ENCODE measurements at regions of chr12 and their contacts with region 1.

Region 1: GRCh38 chr12:68932961-68933893 is at the start of gene CPM:
- DNase-seq: peak; percentile 43 to 76
- ATAC-seq: peak; percentile 96 to 99 (median 97)
- H3K4me3 ChIP-seq: peak within 1 kb of the TSS; percentile 14 to 91 (median 71)
- H3K27ac ChIP-seq: peak within 1 kb of the TSS in 9 of 10 donors; percentile 36 to 87 (median 62)
- H3K4me1 ChIP-seq: peaks cover 0 to 31% (median 13%) of the 10 kb centered on the region in 9 donors
- H3K27me3 ChIP-seq: peaks cover 0 to 16% (median 10%) of the 10 kb centered on the region in 7 donors
- CTCF ChIP-seq: no peak
- total RNA-seq, gene CPM: 2.1 to 17.8 (median 4.7) TPM

Region 2: GRCh38 chr12:68451261-68452077 is 481.8 kb before region 1 on chr12:
- intact Hi-C with region 1: loop called in 1 of 10 experiments (anchors 5 kb)
- DNase-seq: peak in 1 of 2 donors; percentile 19
- ATAC-seq: peak in 7 of 8 donors; percentile 44 to 77 (median 47)
- H3K4me3 ChIP-seq: peak overlapping the region in 4 of 10 donors; percentile 2 to 24 (median 12)
- H3K27ac ChIP-seq: peak overlapping the region in 7 of 10 donors; percentile 3 to 64 (median 56)
- H3K4me1 ChIP-seq: peaks cover 5 to 75% (median 48%) of the 10 kb centered on the region in 9 donors
- H3K27me3 ChIP-seq: no peaks in the 10 kb centered on the region
- CTCF ChIP-seq: no peak

Region 3: GRCh38 chr12:68733661-68734071 is 199.6 kb before region 1 on chr12:
- intact Hi-C with region 1: no loop called
- DNase-seq: no peak
- ATAC-seq: no peak
- H3K4me3 ChIP-seq: no peak overlapping the region
- H3K27ac ChIP-seq: no peak overlapping the region
- H3K4me1 ChIP-seq: no peaks in the 10 kb centered on the region
- H3K27me3 ChIP-seq: no peaks in the 10 kb centered on the region
- CTCF ChIP-seq: no peak